RWPE1 (cell line): ENCODE measurements at regions of chr16 and their contacts with region 1.

Region 1: GRCh38 chr16:30941600-30942425 is 7.1 kb upstream of the ORAI3 start:
- DNase-seq: peak; percentile 80
- H3K27ac ChIP-seq: peak overlapping the region; percentile 91
- CTCF ChIP-seq: peak; percentile 95

Region 2: GRCh38 chr16:30829130-30830071 is 112.4 kb before region 1 on chr16:
- CTCF ChIA-PET with region 1: no interaction called
- POLR2A ChIA-PET with region 1: no interaction called
- DNase-seq: no peak
- H3K27ac ChIP-seq: no peak overlapping the region
- CTCF ChIP-seq: no peak

Region 3: GRCh38 chr16:30922960-30923535 is 18.8 kb before region 1 on chr16:
- CTCF ChIA-PET with region 1: interaction called, 13 read pairs
- POLR2A ChIA-PET with region 1: no interaction called
- DNase-seq: peak; percentile 97
- H3K27ac ChIP-seq: peak overlapping the region; percentile 94
- CTCF ChIP-seq: no peak

Region 4: GRCh38 chr16:30977502-30977901 is 35.7 kb after region 1 on chr16:
- CTCF ChIA-PET with region 1: no interaction called
- POLR2A ChIA-PET with region 1: no interaction called
- DNase-seq: no peak
- H3K27ac ChIP-seq: peak overlapping the region; percentile 25; the same call in 1 of the 2 replicates
- CTCF ChIP-seq: 0 out of 2 replicates have a peak, but pooled peaks have one; percentile 9